OCI-LY7 (cell line): ENCODE measurements at regions of chr12 and their contacts with region 1.

Region 1: GRCh38 chr12:120649442-120650232 is 9.2 kb downstream of the CABP1 start:
- DNase-seq: no peak
- H3K4me3 ChIP-seq: peak overlapping the region; percentile 30
- H3K27ac ChIP-seq: no peak overlapping the region
- H3K4me1 ChIP-seq: peaks cover 42% of the 10 kb centered on the region
- CTCF ChIP-seq: peak; percentile 58; the same call in 1 of the 2 replicates

Region 2: DNA sequence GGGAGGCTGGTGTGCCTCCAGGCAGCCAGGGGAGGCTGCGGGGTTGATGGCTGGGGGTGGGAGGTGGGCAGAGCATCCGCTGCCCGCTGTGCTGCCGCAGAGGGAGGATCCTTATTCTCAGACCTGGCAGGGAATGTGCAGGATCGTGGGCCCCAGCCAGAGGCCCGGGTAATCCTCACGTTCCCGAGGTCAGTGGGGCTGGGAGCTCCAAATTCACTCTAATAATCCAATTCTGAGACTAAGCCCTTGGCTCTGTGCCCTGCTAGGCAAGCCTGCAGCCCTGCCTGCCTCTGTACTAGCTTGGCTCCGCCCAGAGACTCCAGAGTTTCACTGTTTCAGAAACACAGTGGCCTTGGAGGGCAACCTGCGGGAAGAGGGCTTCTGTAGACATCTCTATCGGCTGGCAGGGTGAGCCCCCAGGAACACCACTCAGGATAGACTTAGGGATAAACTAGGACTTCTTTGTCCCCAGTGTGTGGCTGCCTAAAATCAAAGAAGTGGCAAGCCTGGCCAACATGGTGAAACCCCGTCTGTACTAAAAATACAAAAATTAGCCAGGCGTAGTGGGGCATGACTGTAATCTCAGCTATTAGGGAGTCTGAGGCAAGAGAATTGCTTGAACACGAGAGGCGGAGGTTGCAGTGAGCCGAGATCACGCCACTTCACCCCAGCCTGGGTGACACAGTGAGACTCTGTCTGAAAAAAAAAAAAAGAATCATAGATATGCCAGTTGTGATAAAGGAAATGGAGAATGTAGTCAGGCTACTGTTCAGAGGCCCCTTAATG is 19.6 kb after region 1 on chr12:
- CTCF ChIA-PET with region 1: interaction called, 5 read pairs
- POLR2A ChIA-PET with region 1: interaction called, 12 read pairs
- intact Hi-C with region 1: loop called (anchors 1 kb)
- DNase-seq: peak; percentile 72
- H3K4me3 ChIP-seq: peak overlapping the region; percentile 44
- H3K27ac ChIP-seq: peak overlapping the region; percentile 94
- H3K4me1 ChIP-seq: peaks cover 78% of the 10 kb centered on the region
- CTCF ChIP-seq: no peak

Region 3: DNA sequence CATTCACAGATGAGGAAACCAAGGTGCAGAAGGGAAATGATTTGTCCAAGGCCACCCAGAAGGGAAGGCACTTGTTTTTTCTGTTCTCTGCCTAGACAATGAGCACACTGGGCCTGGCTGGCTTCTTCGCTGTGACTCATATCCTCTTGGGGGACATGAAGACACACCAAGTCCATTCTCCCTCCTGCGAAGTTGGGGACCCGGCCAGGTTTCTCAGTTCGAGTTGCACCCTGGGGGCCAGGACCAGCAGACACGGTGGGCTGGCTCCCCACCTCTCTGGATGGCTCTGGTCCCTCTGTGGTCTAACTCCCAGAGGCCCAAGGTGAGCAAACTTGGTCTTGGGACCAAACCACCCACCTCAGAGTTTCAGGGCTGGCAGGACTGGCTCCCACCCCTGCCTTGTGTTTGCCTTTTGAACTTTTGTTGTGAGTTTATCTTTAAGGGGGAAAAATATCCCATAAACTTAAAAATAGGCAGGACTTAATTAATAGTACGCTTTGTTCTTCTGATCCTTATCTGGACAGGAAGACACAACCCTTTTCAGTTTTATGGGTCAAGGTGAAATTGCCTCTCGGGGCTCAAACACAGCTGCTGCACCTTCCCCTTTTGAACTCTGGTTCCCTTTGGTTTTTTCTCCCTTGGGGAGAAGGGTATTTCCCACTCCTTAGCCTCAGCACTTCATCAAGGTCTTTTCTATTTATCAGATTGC is 28.3 kb after region 1 on chr12:
- CTCF ChIA-PET with region 1: interaction called, 4 read pairs
- POLR2A ChIA-PET with region 1: interaction called, 10 read pairs
- intact Hi-C with region 1: no loop called
- DNase-seq: peak; percentile 62
- H3K4me3 ChIP-seq: no peak overlapping the region
- H3K27ac ChIP-seq: peak overlapping the region; percentile 66
- H3K4me1 ChIP-seq: peaks cover 58% of the 10 kb centered on the region
- CTCF ChIP-seq: no peak

Region 4: DNA sequence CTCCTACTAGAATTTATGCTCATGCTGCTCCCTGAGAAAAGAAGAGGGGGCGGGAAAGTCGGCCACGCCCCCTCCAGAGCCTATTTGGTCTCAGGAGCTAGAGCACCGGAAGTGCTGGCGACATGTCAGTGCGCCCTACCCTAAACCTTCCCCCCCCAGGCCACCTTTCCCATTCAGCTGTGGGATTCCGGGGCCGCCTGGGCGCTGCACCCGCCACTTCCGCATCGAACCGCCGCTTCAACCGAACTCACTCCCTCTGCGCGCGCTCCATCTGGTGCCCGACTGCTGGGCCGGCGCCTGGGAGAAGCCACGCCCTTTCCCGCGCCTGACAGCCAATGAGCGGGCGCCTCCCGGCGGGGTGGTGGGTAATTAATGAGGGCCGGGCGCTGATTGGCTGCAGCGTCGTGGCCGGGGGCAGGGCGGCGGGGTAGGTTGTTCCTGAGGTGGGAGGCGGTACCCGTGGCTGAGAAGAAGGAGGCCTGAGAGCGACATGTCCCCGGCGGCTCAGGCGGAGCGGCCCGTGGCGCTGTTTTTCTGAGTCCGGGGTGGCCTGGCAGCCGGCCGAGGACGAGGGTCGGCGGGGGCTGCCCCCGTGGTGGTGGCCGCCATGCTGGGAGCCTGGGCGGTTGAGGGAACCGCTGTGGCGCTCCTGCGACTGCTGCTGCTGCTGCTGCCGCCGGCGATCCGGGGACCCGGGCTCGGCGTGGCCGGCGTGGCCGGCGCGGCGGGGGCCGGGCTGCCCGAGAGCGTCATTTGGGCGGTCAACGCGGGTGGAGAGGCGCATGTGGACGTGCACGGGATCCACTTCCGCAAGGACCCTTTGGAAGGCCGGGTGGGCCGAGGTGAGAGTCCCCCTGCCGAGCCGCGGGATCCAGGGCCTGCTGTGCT is 37.3 kb after region 1 on chr12 and contains the start of gene MLEC:
- CTCF ChIA-PET with region 1: interaction called, 6 read pairs
- POLR2A ChIA-PET with region 1: interaction called, 6 read pairs
- intact Hi-C with region 1: loop called (anchors 1 kb)
- DNase-seq: peak; percentile 99
- H3K4me3 ChIP-seq: peak within 1 kb of the TSS; percentile 91
- H3K27ac ChIP-seq: peak within 1 kb of the TSS; percentile 94
- H3K4me1 ChIP-seq: peaks cover 56% of the 10 kb centered on the region
- CTCF ChIP-seq: peak; percentile 65
- total RNA-seq, gene MLEC: 69.7 and 74.1 TPM in 2 replicates

Region 5: GRCh38 chr12:120710031-120710804 is 60.6 kb after region 1 on chr12 and contains the start of gene UNC119B:
- CTCF ChIA-PET with region 1: interaction called, 8 read pairs
- POLR2A ChIA-PET with region 1: interaction called, 3 read pairs
- intact Hi-C with region 1: loop called (anchors 1 kb)
- DNase-seq: peak; percentile 72
- H3K4me3 ChIP-seq: peak within 1 kb of the TSS; percentile 98
- H3K27ac ChIP-seq: peak within 1 kb of the TSS; percentile 46
- H3K4me1 ChIP-seq: peaks cover 37% of the 10 kb centered on the region
- CTCF ChIP-seq: no peak
- total RNA-seq, gene UNC119B: 16.5 and 17.2 TPM in 2 replicates

Region 6: DNA sequence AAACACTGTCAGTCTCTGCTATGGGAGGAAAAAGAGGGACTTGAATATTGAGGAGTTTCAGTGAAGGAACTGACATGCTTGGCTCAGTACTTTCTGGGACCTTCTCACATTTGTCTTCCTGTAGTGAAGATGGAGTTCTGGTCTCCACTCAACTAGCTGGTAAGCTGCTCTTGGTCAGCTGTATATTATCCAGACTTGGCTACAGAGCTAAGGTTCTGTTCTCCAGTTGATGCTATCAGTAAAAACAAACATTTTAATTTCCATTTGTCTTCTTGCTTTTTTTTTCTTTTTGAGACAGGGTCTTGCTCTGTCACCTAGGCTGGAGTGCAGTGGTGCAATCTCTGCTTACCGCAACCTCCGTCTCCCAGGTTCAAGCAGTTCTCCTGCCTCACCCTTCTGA is 755.6 kb after region 1 on chr12:
- CTCF ChIA-PET with region 1: no interaction called
- POLR2A ChIA-PET with region 1: no interaction called
- intact Hi-C with region 1: no loop called
- DNase-seq: no peak
- H3K4me3 ChIP-seq: no peak overlapping the region
- H3K27ac ChIP-seq: no peak overlapping the region
- H3K4me1 ChIP-seq: peaks cover 16% of the 10 kb centered on the region
- CTCF ChIP-seq: no peak